IMR-90 (cell line): ENCODE measurements at regions of chr1 and their contacts with region 1.

Region 1: DNA sequence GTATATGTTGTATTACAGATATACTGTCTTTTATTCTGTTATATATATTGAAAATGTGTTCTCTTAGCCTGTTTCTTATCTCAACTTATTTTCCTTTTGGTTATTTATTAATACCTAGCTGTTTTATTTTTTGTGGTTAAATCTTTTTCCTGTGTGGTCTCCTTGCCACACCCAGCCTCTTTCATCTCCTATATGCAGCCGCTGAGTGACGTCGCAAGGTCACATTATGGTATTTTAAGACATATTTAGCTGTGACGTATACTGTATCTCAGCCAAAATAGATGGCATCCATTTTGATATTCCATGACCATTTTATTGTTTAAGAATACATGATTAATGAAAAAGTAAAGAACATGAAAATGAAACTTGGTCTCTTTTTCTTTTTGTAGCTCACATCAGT is 29.1 kb downstream of the CENPF start:
- DNase-seq: no peak
- ATAC-seq: no peak
- H3K4me3 ChIP-seq: no peak overlapping the region
- H3K27ac ChIP-seq: no peak overlapping the region
- H3K4me1 ChIP-seq: no peaks in the 10 kb centered on the region
- H3K27me3 ChIP-seq: no peaks in the 10 kb centered on the region
- CTCF ChIP-seq: no peak
- POLR2A ChIP-seq: no peak
- RAD21 ChIP-seq: no peak

Region 2: GRCh38 chr1:213374369-213374768 is 1257.7 kb before region 1 on chr1:
- CTCF ChIA-PET with region 1: no interaction called
- POLR2A ChIA-PET with region 1: no interaction called
- dilution Hi-C with region 1: no loop called
- in situ Hi-C with region 1: no loop called
- intact Hi-C with region 1: loop called (anchors 5 kb)
- DNase-seq: peak; percentile 32
- ATAC-seq: peak; percentile 92
- H3K4me3 ChIP-seq: no peak overlapping the region
- H3K27ac ChIP-seq: no peak overlapping the region
- H3K4me1 ChIP-seq: no peaks in the 10 kb centered on the region
- H3K27me3 ChIP-seq: no peaks in the 10 kb centered on the region
- CTCF ChIP-seq: peak; percentile 78
- POLR2A ChIP-seq: no peak
- RAD21 ChIP-seq: peak; percentile 58

Region 3: DNA sequence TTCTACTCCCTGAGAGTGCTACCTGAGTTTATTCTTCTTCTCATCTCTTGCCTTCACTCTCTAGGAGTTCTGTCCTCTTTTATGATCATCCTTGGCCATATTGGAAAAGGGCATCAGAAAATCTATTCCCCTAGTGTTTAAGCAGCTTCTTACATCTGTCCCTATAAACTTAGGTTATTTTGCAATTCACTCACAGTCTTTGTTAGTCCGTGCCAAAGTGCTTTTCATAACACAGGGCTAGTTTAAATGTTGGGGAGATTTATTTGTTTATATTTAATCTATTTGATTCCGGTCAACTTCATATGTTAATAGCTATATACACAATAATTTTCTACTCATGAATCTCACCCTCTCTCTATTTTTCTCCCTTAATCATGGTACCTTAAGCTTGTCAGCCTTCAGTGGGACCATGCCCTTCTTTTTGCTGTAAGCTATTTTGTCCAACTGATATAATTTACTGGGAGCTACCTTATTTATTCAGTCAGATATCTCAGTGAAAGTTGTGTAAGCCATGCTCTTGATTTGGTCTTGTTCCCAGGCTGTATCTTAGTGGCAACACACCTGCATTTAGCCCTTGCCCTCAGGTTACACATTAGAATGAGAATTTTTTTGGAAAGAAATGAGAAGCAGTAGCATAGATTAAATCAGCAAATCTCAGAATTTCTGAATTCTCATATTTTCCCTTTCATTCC is 457.4 kb before region 1 on chr1:
- CTCF ChIA-PET with region 1: no interaction called
- POLR2A ChIA-PET with region 1: no interaction called
- dilution Hi-C with region 1: no loop called
- in situ Hi-C with region 1: no loop called
- intact Hi-C with region 1: no loop called
- DNase-seq: no peak
- ATAC-seq: no peak
- H3K4me3 ChIP-seq: no peak overlapping the region
- H3K27ac ChIP-seq: no peak overlapping the region
- H3K4me1 ChIP-seq: no peaks in the 10 kb centered on the region
- H3K27me3 ChIP-seq: peaks cover 2% of the 10 kb centered on the region; the same call in 1 of the 2 replicates
- CTCF ChIP-seq: no peak
- POLR2A ChIP-seq: no peak
- RAD21 ChIP-seq: no peak

Region 4: DNA sequence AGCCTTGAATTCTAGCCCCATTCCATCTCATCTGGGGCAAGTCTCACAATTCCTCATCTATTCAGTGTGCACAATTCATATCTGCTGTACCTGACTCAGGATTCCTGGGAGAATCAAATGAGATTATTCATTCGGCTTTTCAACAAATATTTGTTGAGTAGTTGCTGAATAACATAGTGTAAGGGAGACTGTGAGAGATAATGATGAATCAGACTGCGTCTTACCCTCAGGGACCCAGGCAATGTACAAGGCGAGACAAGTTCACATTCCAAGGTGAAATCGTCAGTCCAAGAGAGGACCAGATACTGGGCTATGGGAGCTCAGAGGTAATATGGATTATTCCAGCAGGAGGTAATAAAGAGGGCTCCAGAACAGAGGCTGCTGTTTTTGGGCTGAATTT is 419.0 kb before region 1 on chr1:
- CTCF ChIA-PET with region 1: no interaction called
- POLR2A ChIA-PET with region 1: no interaction called
- dilution Hi-C with region 1: no loop called
- in situ Hi-C with region 1: no loop called
- intact Hi-C with region 1: loop called (anchors 1 kb)
- DNase-seq: peak; percentile 18
- ATAC-seq: peak; percentile 48
- H3K4me3 ChIP-seq: no peak overlapping the region
- H3K27ac ChIP-seq: no peak overlapping the region
- H3K4me1 ChIP-seq: no peaks in the 10 kb centered on the region; the same call in 1 of the 2 replicates
- H3K27me3 ChIP-seq: peaks cover 38% of the 10 kb centered on the region
- CTCF ChIP-seq: no peak
- POLR2A ChIP-seq: no peak
- RAD21 ChIP-seq: no peak

Region 5: GRCh38 chr1:215146341-215146826 is 514.3 kb after region 1 on chr1:
- CTCF ChIA-PET with region 1: interaction called, 3 read pairs
- POLR2A ChIA-PET with region 1: no interaction called
- dilution Hi-C with region 1: no loop called
- in situ Hi-C with region 1: no loop called
- intact Hi-C with region 1: loop called (anchors 1 kb)
- DNase-seq: peak; percentile 64
- ATAC-seq: no peak
- H3K4me3 ChIP-seq: no peak overlapping the region
- H3K27ac ChIP-seq: no peak overlapping the region
- H3K4me1 ChIP-seq: no peaks in the 10 kb centered on the region
- H3K27me3 ChIP-seq: no peaks in the 10 kb centered on the region
- CTCF ChIP-seq: peak; percentile 74
- POLR2A ChIP-seq: no peak
- RAD21 ChIP-seq: peak; percentile 76

Region 6: DNA sequence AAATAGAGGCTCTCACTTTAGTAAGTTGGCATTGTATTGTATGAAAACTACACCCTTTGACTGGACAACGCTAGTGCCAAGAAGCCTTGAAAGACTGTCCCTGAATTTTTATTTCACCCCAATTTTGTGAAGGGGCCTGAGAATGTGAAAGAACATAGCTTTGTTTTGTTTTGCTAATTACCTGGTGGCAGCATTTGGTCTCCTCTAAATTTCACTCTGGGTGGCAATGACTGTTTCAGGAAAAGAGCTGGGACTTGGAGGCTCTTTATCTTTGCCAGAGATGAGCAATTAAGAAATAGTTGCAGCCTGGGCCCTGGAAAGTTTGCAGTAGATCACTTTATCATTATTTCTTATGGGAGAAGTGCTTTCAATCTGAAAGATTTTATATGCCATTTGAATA is 568.0 kb after region 1 on chr1:
- CTCF ChIA-PET with region 1: no interaction called
- POLR2A ChIA-PET with region 1: interaction called, 19 read pairs
- dilution Hi-C with region 1: no loop called
- in situ Hi-C with region 1: no loop called
- intact Hi-C with region 1: no loop called
- DNase-seq: no peak
- ATAC-seq: no peak
- H3K4me3 ChIP-seq: no peak overlapping the region
- H3K27ac ChIP-seq: no peak overlapping the region
- H3K4me1 ChIP-seq: no peaks in the 10 kb centered on the region
- H3K27me3 ChIP-seq: no peaks in the 10 kb centered on the region
- CTCF ChIP-seq: no peak
- POLR2A ChIP-seq: no peak
- RAD21 ChIP-seq: no peak